ENCODE measurements at regions of chr3 and their contacts with region 1.

Region 1: DNA sequence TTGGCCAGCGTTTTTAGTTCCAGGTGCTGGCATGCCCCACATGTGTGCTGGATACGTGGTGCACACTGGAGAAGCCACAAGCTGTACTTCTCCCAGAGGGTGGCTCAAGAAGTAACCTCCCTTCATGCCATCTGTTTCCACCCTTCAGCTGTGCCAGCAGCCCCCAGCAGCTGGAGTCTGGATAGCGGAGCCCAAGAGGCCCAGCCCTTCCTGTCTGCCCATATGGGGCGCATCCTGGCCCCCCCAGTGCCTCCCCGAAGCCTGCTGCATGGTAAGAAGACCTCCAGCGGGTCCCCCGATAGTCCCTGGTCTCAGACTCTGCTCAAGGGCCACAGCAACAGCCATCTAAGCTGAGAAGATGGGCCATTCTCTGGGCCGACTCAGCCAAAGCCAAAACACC is 5.8 kb upstream of the MANF start:
- DNase-seq: no peak
- H3K4me3 ChIP-seq: no peak overlapping the region
- H3K27ac ChIP-seq: no peak overlapping the region
- H3K4me1 ChIP-seq: peaks cover 6% of the 10 kb centered on the region in 2 experiments; a peak in 3 of 4 replicates
- H3K27me3 ChIP-seq: no peaks in the 10 kb centered on the region; the same call in 1 of the 2 replicates
- CTCF ChIP-seq: no peak
- EP300 ChIP-seq: no peak
- RAD21 ChIP-seq: no peak

Region 2: DNA sequence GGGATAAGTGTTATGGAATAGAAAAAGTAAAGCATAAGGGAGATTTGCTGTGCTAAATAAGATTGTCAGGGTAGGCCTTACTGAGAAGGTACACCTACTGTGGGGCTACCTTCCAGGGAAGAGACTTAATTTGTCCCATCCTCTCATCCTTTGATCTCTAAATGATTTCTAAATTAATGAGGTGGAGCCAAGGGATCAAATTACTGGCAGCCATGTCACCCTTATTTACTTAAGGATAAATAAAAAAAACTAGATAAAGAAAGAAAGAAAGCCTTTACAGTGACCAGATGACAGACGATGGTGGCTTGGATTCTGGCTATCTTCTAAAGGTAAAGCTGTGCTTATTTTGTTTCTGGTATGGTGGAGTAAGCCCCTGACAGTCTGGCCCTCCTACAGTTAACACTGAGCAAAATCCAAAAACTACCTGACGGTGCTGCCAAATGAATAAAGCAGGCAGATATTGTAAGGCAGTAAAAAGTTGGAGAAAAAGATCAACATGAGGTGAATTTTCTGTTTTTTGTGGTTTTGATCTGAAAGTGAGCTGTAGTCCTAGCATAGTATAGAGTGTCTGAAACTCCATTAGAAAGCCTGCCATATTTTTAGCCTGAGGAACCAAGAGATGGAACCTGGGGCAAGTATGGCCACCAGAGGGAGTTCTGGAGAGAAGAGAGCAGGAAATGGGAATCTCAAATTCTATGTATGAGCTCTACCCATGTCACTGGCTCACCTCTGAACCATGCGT is 279.3 kb before region 1 on chr3:
- CTCF ChIA-PET with region 1: interaction called, 12 read pairs
- POLR2A ChIA-PET with region 1: no interaction called
- DNase-seq: peak; percentile 55
- H3K4me3 ChIP-seq: no peak overlapping the region; a peak in 1 of 4 replicates
- H3K27ac ChIP-seq: no peak overlapping the region
- H3K4me1 ChIP-seq: no peaks in the 10 kb centered on the region
- H3K27me3 ChIP-seq: no peaks in the 10 kb centered on the region
- CTCF ChIP-seq: peak; percentile 82
- EP300 ChIP-seq: no peak
- RAD21 ChIP-seq: peak; percentile 58

Region 3: GRCh38 chr3:52367896-52368880 is 988.9 kb after region 1 on chr3:
- CTCF ChIA-PET with region 1: no interaction called
- POLR2A ChIA-PET with region 1: no interaction called
- DNase-seq: no peak
- H3K4me3 ChIP-seq: no peak overlapping the region
- H3K27ac ChIP-seq: no peak overlapping the region
- H3K4me1 ChIP-seq: no peaks in the 10 kb centered on the region; a peak in 1 of 4 replicates
- H3K27me3 ChIP-seq: no peaks in the 10 kb centered on the region
- CTCF ChIP-seq: no peak
- EP300 ChIP-seq: no peak
- RAD21 ChIP-seq: no peak

Measured in SK-N-SH (cell line).